Breast epithelium (tissue), 4 donors: ENCODE measurements at regions of chr12 and their contacts with region 1.

Region 1: DNA sequence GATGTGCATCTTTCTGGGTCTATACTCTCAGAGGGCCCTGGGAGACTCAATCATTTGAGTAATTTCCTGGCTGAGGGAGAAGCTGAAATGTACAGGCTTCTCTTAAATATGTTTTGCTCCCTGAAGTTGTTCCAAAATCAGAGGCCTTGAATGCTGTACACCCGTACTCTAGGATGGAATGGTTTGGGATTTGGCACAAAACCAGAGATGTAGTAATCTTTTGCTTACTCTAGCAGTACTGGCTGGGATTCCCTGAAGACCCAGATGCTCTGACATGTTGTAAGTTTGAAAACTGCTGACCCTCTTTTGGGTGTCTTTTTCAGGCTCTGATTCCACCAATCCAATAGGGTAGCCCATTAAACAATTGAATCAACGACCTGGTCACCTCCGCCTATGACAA is 10.4 kb downstream of the ACACB start:
- DNase-seq: no peak
- H3K4me3 ChIP-seq: no peak overlapping the region
- H3K27ac ChIP-seq: peak overlapping the region in 1 of 2 donors; percentile 46
- H3K4me1 ChIP-seq: no peaks in the 10 kb centered on the region
- H3K27me3 ChIP-seq: no peaks in the 10 kb centered on the region
- CTCF ChIP-seq: no peak
- POLR2A ChIP-seq: no peak

Region 2: GRCh38 chr12:109154451-109155438 is 28.0 kb after region 1 on chr12:
- intact Hi-C with region 1: loop called (anchors 1 kb)
- DNase-seq: peak; percentile 71 to 78
- H3K4me3 ChIP-seq: peak overlapping the region; percentile 67 to 77 (median 70)
- H3K27ac ChIP-seq: peak overlapping the region; percentile 68 to 76
- H3K4me1 ChIP-seq: peaks cover 0 to 6% of the 10 kb centered on the region in 2 donors
- H3K27me3 ChIP-seq: no peaks in the 10 kb centered on the region
- CTCF ChIP-seq: peak in 1 of 3 donors; percentile 8
- POLR2A ChIP-seq: no peak